Endothelial cell of umbilical vein (primary cell): ENCODE measurements at regions of chr4 and their contacts with region 1.

Region 1: DNA sequence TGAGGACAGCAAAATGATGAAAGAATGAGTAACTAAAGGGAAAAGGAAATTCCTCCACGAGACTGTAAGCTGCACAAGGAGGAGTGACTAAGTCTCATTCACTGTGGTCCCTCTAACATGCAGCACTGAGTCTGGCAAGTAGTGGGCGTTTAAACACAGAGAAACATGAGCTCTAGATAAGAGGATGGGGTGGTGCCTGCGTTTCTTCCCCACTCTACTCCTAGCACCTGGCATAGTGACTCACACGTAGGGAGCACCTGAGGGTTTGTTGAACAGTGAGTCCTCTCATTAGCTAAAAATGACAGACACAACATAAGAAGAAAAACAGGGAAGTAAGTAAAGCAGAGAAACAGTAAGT is 105.8 kb upstream of the CBR4 start:
- DNase-seq: peak; percentile 95
- H3K4me3 ChIP-seq: no peak overlapping the region
- H3K27ac ChIP-seq: peak overlapping the region; percentile 77
- H3K4me1 ChIP-seq: peaks cover 32% of the 10 kb centered on the region
- H3K27me3 ChIP-seq: no peaks in the 10 kb centered on the region
- CTCF ChIP-seq: peak; percentile 43 to 52
- POLR2A ChIP-seq: no peak

Region 2: DNA sequence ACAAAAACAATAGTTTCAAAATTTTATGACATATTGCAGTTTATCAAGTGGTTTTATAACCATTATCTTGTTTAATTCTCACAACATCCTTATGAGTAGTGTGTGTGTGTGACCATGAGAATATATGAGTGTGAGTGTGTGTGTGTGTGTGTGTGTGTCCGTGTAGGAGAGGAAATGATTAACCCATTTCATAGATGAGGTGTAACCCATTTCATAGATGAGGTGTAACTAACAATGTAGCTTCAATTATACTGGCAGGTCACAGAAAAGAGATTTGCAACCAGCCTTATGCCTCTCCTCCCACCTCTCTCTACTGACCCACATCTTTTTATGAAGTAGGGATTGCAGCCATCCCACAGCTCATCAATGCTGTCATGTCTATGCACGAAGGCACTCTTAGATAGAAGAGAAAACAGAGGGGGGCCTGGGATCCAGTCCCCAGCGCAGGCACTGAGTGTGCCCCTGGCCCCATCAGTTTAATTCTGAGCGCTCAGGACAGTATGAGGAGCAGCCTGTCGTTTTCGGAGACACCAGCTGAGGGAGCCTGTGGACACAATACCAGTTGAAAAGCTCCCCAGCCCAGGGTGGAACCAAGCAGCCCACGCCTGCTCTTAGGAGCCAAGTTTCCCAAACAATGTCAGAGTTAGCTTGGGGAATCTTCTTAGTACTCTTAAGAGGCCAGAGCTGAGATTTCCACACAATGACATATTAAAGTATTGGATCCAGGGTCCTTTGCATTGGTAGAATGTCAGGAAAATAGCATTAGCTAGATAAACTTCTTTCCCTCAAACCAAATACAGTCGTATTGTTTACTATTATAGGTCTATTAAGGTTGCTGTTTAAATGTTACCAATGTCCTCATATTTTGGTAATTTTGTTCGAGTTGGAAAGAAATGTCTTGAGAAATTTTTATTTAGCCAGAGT is 530.4 kb before region 1 on chr4:
- CTCF ChIA-PET with region 1: no interaction called
- POLR2A ChIA-PET with region 1: no interaction called
- dilution Hi-C with region 1: no loop called
- intact Hi-C with region 1: no loop called
- DNase-seq: peak; percentile 78
- H3K4me3 ChIP-seq: no peak overlapping the region
- H3K27ac ChIP-seq: no peak overlapping the region
- H3K4me1 ChIP-seq: peaks cover 14% of the 10 kb centered on the region
- H3K27me3 ChIP-seq: no peaks in the 10 kb centered on the region
- CTCF ChIP-seq: peak; percentile 58 to 80
- POLR2A ChIP-seq: no peak

Region 3: GRCh38 chr4:169024762-169025161 is 91.1 kb before region 1 on chr4:
- CTCF ChIA-PET with region 1: interaction called, 21 read pairs
- POLR2A ChIA-PET with region 1: no interaction called
- dilution Hi-C with region 1: no loop called
- intact Hi-C with region 1: loop called (anchors 5 kb)
- DNase-seq: peak; percentile 68
- H3K4me3 ChIP-seq: no peak overlapping the region
- H3K27ac ChIP-seq: no peak overlapping the region
- H3K4me1 ChIP-seq: no peaks in the 10 kb centered on the region
- H3K27me3 ChIP-seq: no peaks in the 10 kb centered on the region
- CTCF ChIP-seq: peak; percentile 51 to 57
- POLR2A ChIP-seq: no peak

Region 4: GRCh38 chr4:169099771-169100180 is 16.1 kb before region 1 on chr4:
- CTCF ChIA-PET with region 1: interaction called, 17 read pairs
- POLR2A ChIA-PET with region 1: interaction called, 4 read pairs
- dilution Hi-C with region 1: no loop called
- intact Hi-C with region 1: loop called (anchors 1 kb)
- DNase-seq: peak; percentile 42
- H3K4me3 ChIP-seq: no peak overlapping the region
- H3K27ac ChIP-seq: peak overlapping the region; percentile 30
- H3K4me1 ChIP-seq: peaks cover 36% of the 10 kb centered on the region
- H3K27me3 ChIP-seq: no peaks in the 10 kb centered on the region
- CTCF ChIP-seq: no peak
- POLR2A ChIP-seq: no peak

Region 5: GRCh38 chr4:169147191-169147590 is 31.3 kb after region 1 on chr4:
- CTCF ChIA-PET with region 1: interaction called, 7 read pairs
- POLR2A ChIA-PET with region 1: no interaction called
- dilution Hi-C with region 1: no loop called
- intact Hi-C with region 1: loop called (anchors 2 kb)
- DNase-seq: peak; percentile 73
- H3K4me3 ChIP-seq: no peak overlapping the region
- H3K27ac ChIP-seq: peak overlapping the region; percentile 89
- H3K4me1 ChIP-seq: peaks cover 56% of the 10 kb centered on the region
- H3K27me3 ChIP-seq: no peaks in the 10 kb centered on the region
- CTCF ChIP-seq: no peak
- POLR2A ChIP-seq: no peak

Region 6: GRCh38 chr4:169238445-169238844 is 122.6 kb after region 1 on chr4:
- CTCF ChIA-PET with region 1: interaction called, 12 read pairs
- POLR2A ChIA-PET with region 1: no interaction called
- dilution Hi-C with region 1: no loop called
- intact Hi-C with region 1: no loop called
- DNase-seq: peak; percentile 67
- H3K4me3 ChIP-seq: no peak overlapping the region
- H3K27ac ChIP-seq: no peak overlapping the region
- H3K4me1 ChIP-seq: peaks cover 24% of the 10 kb centered on the region
- H3K27me3 ChIP-seq: no peaks in the 10 kb centered on the region
- CTCF ChIP-seq: no peak
- POLR2A ChIP-seq: no peak

Region 7: DNA sequence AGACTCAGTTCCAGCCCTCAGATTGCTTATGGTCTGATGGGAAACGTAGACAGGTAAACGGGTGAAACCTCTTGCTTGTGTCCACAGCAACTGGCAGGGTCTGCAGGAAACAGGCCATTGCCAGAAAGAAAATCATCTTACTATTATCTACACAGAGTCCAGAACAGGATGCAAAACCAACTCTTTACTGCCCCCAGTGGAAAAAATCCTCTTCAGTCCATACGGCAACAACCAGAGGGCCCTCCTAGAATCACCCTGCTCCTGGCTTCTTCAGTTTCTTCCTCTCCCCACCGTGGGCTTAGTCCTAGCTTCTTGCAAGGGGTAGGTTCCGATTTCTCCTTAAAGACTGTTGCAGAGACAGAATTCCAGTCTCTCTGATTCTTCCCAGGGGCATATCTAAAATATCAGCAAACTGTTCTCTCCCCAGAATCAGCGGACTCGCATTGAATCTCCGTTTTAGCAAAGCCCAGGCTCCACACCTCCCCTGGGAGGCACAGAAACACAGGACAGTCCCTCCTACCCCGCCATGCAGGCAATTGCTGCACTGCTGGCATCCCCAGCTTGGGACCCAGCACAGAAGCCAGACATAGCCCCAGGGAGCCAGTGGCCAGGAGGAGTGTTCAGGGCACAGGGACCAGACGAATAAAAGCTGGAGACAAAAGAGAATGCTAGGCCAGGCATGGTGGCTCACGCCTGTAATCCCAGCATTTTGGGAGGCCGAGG is 195.9 kb after region 1 on chr4:
- CTCF ChIA-PET with region 1: interaction called, 3 read pairs
- POLR2A ChIA-PET with region 1: no interaction called
- dilution Hi-C with region 1: no loop called
- intact Hi-C with region 1: loop called (anchors 5 kb)
- DNase-seq: peak; percentile 57
- H3K4me3 ChIP-seq: no peak overlapping the region
- H3K27ac ChIP-seq: no peak overlapping the region
- H3K4me1 ChIP-seq: peaks cover 13% of the 10 kb centered on the region
- H3K27me3 ChIP-seq: no peaks in the 10 kb centered on the region
- CTCF ChIP-seq: peak; percentile 60 to 66
- POLR2A ChIP-seq: no peak